ENCODE measurements at regions of chr5 and their contacts with region 1.

Region 1: GRCh38 chr5:90264689-90265544 is 144.6 kb downstream of the CETN3 start:
- DNase-seq: peak; percentile 72
- H3K4me3 ChIP-seq: no peak overlapping the region
- H3K27ac ChIP-seq: no peak overlapping the region
- H3K4me1 ChIP-seq: no peaks in the 10 kb centered on the region
- H3K27me3 ChIP-seq: no peaks in the 10 kb centered on the region
- CTCF ChIP-seq: peak; percentile 84 to 90
- POLR2A ChIP-seq: no peak

Region 2: DNA sequence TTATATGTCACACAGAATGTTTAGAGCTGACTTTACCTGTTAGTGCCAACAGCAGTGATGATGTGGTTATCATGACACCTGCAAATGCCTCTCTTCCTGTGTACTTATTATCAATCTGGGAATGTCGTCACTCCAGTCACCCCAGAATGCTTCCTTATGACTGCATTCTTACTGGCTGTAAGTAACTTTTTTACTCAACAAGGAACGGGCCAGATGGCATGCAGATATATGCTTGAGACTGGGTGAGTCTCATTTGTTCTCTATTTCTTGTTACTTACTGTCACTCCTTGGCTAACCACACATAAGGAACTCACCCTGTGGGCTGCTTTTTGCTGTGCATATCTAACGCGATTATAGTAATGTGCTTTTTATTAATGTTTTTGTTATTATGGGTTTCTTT is 996.5 kb before region 1 on chr5:
- CTCF ChIA-PET with region 1: interaction called, 3 read pairs
- POLR2A ChIA-PET with region 1: no interaction called
- dilution Hi-C with region 1: no loop called
- intact Hi-C with region 1: loop called (anchors 10 kb)
- DNase-seq: no peak
- H3K4me3 ChIP-seq: no peak overlapping the region
- H3K27ac ChIP-seq: no peak overlapping the region
- H3K4me1 ChIP-seq: no peaks in the 10 kb centered on the region
- H3K27me3 ChIP-seq: no peaks in the 10 kb centered on the region
- CTCF ChIP-seq: no peak
- POLR2A ChIP-seq: no peak

Region 3: DNA sequence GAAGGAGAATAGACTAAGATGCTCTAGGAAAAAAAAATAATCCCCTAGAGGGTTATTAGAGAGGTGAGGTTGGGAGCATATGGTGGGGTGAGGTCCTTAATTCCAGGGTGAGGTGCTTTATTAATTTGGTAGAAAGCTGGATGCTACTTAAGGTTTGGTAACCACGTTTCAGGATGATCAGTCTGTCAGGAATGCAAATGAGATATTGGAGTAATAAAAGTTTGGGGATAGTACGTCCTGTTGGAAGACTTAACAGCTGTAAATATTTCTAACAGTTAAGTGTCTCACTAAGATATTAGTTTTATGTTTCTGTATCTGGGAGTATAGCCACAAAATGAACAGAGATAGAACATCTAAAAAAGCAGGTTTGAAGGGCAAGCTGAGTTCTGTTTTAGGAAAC is 434.2 kb before region 1 on chr5:
- CTCF ChIA-PET with region 1: no interaction called
- POLR2A ChIA-PET with region 1: no interaction called
- dilution Hi-C with region 1: no loop called
- intact Hi-C with region 1: loop called (anchors 10 kb)
- DNase-seq: no peak
- H3K4me3 ChIP-seq: no peak overlapping the region
- H3K27ac ChIP-seq: no peak overlapping the region
- H3K4me1 ChIP-seq: no peaks in the 10 kb centered on the region
- H3K27me3 ChIP-seq: no peaks in the 10 kb centered on the region
- CTCF ChIP-seq: no peak
- POLR2A ChIP-seq: no peak

Region 4: DNA sequence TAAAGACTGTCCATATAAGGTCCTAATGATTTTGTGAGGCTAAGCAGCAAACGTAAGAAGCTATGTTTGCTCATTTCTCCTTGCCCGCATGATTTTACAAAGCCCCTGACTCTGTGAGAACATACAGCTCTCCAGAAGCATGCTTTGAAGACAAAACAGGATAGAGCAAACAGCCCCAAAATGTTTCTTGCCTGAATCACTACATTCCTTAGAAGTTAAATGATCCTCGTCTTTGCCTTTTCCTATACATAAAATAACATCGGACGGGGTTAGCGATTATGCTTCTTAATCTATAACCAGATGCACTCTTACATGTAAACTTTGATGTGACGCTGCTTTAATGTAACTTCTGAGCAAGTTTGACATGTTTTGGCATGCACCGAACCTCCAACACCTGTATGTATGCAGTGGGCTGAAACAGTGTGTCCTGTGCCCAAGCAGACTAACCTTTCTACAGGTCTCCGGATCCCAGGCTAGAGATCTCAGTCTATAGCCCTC is 209.0 kb before region 1 on chr5:
- CTCF ChIA-PET with region 1: no interaction called
- POLR2A ChIA-PET with region 1: no interaction called
- dilution Hi-C with region 1: no loop called
- intact Hi-C with region 1: no loop called
- DNase-seq: no peak
- H3K4me3 ChIP-seq: no peak overlapping the region
- H3K27ac ChIP-seq: no peak overlapping the region
- H3K4me1 ChIP-seq: no peaks in the 10 kb centered on the region
- H3K27me3 ChIP-seq: no peaks in the 10 kb centered on the region
- CTCF ChIP-seq: no peak
- POLR2A ChIP-seq: no peak

Region 5: GRCh38 chr5:90135779-90136378 is 129.0 kb before region 1 on chr5:
- CTCF ChIA-PET with region 1: interaction called, 3 read pairs
- POLR2A ChIA-PET with region 1: no interaction called
- dilution Hi-C with region 1: no loop called
- intact Hi-C with region 1: loop called (anchors 1 kb)
- DNase-seq: no peak
- H3K4me3 ChIP-seq: no peak overlapping the region
- H3K27ac ChIP-seq: no peak overlapping the region
- H3K4me1 ChIP-seq: peaks cover 14% of the 10 kb centered on the region
- H3K27me3 ChIP-seq: no peaks in the 10 kb centered on the region
- CTCF ChIP-seq: no peak
- POLR2A ChIP-seq: no peak

Region 6: GRCh38 chr5:90386099-90386710 is 121.3 kb after region 1 on chr5:
- CTCF ChIA-PET with region 1: no interaction called
- POLR2A ChIA-PET with region 1: no interaction called
- dilution Hi-C with region 1: no loop called
- intact Hi-C with region 1: loop called (anchors 5 kb)
- DNase-seq: peak; percentile 36
- H3K4me3 ChIP-seq: no peak overlapping the region
- H3K27ac ChIP-seq: no peak overlapping the region
- H3K4me1 ChIP-seq: no peaks in the 10 kb centered on the region
- H3K27me3 ChIP-seq: no peaks in the 10 kb centered on the region
- CTCF ChIP-seq: peak; percentile 20 to 29
- POLR2A ChIP-seq: no peak